GM18951 (cell line): ENCODE measurements at regions of chr15 and their contacts with region 1.

Region 1: GRCh38 chr15:47196057-47196456 is 521.2 kb upstream of the SEMA6D start:
- POLR2A ChIP-seq: no peak

Region 2: GRCh38 chr15:48285329-48286214 is 1089.5 kb after region 1 on chr15:
- in situ Hi-C with region 1: loop called (anchors 25 kb)
- POLR2A ChIP-seq: no peak